ENCODE measurements at regions of chr15 and their contacts with region 1.

Region 1: DNA sequence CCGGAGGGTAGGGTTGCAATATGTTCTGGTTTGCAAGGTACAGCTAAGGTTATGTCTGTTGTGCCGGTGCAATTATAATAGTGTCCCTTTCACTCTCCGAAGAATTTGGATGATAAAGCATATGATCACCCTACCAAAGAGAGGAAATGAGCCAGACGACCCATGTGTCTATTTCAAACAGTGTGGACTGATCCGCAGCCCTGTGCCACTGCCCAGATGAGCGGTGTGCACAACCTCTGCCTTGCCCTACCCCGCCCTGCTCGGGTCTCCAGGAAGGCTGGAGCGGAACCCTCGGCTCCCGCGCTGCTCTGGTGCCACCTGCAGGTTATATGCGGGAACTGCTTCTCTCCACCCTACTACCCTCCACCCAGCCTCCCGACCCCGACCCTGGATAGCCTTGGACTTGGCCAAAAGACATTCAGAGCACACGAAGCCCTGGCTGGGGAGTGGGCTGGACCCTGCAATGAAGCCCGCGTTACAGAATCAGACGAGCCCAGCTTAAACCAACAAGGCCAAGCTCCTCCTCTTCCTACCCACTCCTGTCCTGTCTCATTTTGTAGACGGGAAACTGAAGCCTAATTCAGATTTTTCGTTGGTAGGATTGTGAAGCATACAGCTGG is 68.4 kb upstream of the CHRNB4 start:
- DNase-seq: peak; percentile 77
- H3K4me3 ChIP-seq: no peak overlapping the region
- H3K27ac ChIP-seq: no peak overlapping the region
- H3K4me1 ChIP-seq: no peaks in the 10 kb centered on the region
- H3K27me3 ChIP-seq: no peaks in the 10 kb centered on the region
- CTCF ChIP-seq: peak; percentile 88

Region 2: DNA sequence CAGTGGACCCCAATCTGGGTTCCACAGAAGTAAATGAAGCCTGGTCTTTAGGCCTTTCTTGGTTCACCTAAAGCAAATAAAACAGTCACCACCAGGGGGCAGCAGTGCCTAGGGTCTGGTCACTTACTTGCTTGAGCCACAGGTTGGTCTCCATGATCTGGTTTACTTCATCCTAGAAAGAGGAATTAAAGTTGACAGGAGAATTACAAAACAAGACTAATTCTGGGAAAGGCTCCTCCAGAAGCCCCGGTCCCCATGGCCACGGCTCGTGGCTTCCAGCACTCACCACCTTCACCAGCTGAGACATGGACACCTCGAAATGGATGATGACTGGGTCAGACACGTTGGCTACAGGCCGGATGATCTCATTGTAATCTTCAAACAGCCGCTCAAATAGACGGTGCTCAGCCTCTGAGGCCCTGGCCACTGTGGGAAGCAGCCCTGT is 90.9 kb before region 1 on chr15:
- intact Hi-C with region 1: loop called (anchors 1 kb)
- DNase-seq: peak; percentile 94
- H3K4me3 ChIP-seq: no peak overlapping the region
- H3K27ac ChIP-seq: no peak overlapping the region
- H3K4me1 ChIP-seq: no peaks in the 10 kb centered on the region
- H3K27me3 ChIP-seq: peaks cover 34% of the 10 kb centered on the region
- CTCF ChIP-seq: peak; percentile 79

Region 3: DNA sequence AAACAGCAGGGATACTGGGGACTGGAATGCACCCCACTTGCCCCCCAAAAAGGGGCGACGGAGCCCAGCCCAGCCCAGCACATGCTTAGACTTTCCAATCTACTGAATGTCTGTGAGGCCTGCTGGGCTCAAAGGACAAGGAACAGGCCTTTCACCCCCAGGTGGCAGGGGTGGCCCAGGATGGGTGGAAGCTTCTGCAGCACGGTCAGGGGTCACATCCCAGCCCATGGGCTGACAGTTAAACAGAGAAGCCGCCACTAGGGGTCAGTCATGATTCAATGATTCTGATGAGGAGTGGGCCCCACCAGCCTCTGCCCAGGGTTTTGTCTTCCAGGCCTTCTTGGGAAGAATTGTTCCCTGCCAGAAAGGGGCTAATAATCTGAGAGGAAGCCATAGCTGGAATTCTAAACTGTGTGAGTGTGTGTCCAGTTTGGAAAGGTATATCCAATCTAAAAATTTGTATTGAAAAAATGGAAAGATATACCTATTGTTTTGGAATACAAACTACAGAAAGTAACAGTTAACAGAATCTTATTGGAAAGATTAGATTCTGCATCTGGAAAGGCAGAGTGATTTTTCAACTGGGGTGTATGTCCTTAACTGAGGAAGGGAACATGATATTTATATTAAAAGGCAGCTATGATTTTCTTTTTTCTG is 70.6 kb before region 1 on chr15:
- intact Hi-C with region 1: loop called (anchors 5 kb)
- DNase-seq: peak; percentile 60
- H3K4me3 ChIP-seq: no peak overlapping the region
- H3K27ac ChIP-seq: no peak overlapping the region
- H3K4me1 ChIP-seq: peaks cover 3% of the 10 kb centered on the region
- H3K27me3 ChIP-seq: peaks cover 5% of the 10 kb centered on the region
- CTCF ChIP-seq: peak; percentile 34

Region 4: DNA sequence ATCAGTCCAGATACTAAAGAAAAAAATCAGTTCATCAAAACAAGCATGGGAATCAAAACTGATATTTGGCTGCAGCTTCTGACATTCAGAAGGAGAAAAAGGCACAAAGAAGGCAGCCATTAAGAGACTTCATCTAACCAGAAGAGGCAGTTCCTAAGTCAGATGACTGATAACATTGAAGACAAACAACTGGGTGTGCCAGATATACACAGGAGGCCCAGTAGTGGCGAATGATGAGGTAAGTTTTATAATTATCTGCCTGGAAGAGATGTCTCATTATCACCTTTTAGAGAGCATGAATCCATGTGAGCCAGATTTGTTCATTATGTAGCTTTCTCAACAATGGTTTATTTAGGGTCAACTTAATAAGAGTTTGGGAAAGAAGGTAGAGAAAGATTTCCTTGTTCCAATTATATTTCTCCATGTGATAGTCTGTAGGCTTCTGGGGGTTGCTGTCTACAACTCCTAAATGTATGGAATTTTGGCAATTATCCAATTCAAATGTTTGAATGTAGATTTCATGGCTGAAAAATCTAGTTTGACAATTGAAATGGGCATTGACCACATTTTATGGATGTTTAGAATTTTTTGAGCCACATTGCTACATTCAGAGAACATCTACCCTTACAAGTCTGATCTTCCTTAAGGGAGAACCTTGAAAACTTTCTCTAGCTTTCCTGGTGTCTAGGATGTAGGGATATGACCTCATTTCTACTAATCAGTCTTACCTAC is 431.6 kb after region 1 on chr15:
- intact Hi-C with region 1: no loop called
- DNase-seq: no peak
- H3K4me3 ChIP-seq: no peak overlapping the region
- H3K27ac ChIP-seq: no peak overlapping the region
- H3K4me1 ChIP-seq: no peaks in the 10 kb centered on the region
- H3K27me3 ChIP-seq: no peaks in the 10 kb centered on the region
- CTCF ChIP-seq: no peak